Activated CD4-positive, alpha-beta memory T cell treated with anti-CD3 and anti-CD28 coated beads, Interleukin-2, amount 10 ng/mL, durations not matched to agents 7 days and 5 days (primary cell): ENCODE measurements at regions of chr9 and their contacts with region 1.

Region 1: GRCh38 chr9:4315582-4316215 is 15.8 kb upstream of the GLIS3 start:
- DNase-seq: peak; percentile 76
- H3K4me3 Mint-ChIP-seq: no peak overlapping the region
- H3K27ac Mint-ChIP-seq: no peak overlapping the region
- H3K4me1 Mint-ChIP-seq: no peaks in the 10 kb centered on the region
- H3K27me3 Mint-ChIP-seq: peaks cover 9% of the 10 kb centered on the region

Region 2: GRCh38 chr9:4301971-4302427 is 13.7 kb before region 1 on chr9:
- CTCF ChIA-PET with region 1: interaction called, 22 read pairs
- POLR2A ChIA-PET with region 1: no interaction called
- DNase-seq: no peak
- H3K4me3 Mint-ChIP-seq: no peak overlapping the region
- H3K27ac Mint-ChIP-seq: no peak overlapping the region
- H3K4me1 Mint-ChIP-seq: peaks cover 23% of the 10 kb centered on the region
- H3K27me3 Mint-ChIP-seq: peaks cover 51% of the 10 kb centered on the region

Region 3: GRCh38 chr9:4339357-4339756 is 23.7 kb after region 1 on chr9:
- CTCF ChIA-PET with region 1: interaction called, 11 read pairs
- POLR2A ChIA-PET with region 1: interaction called, 3 read pairs
- DNase-seq: peak; percentile 82
- H3K4me3 Mint-ChIP-seq: no peak overlapping the region
- H3K27ac Mint-ChIP-seq: no peak overlapping the region
- H3K4me1 Mint-ChIP-seq: peaks cover 6% of the 10 kb centered on the region
- H3K27me3 Mint-ChIP-seq: peaks cover 2% of the 10 kb centered on the region

Region 4: GRCh38 chr9:4366591-4367330 is 51.1 kb after region 1 on chr9:
- CTCF ChIA-PET with region 1: interaction called, 46 read pairs
- POLR2A ChIA-PET with region 1: no interaction called
- DNase-seq: peak; percentile 24
- H3K4me3 Mint-ChIP-seq: no peak overlapping the region
- H3K27ac Mint-ChIP-seq: no peak overlapping the region
- H3K4me1 Mint-ChIP-seq: peaks cover 2% of the 10 kb centered on the region
- H3K27me3 Mint-ChIP-seq: peaks cover 12% of the 10 kb centered on the region

Region 5: GRCh38 chr9:4375424-4376200 is 59.9 kb after region 1 on chr9:
- CTCF ChIA-PET with region 1: interaction called, 12 read pairs
- POLR2A ChIA-PET with region 1: no interaction called
- DNase-seq: no peak
- H3K4me3 Mint-ChIP-seq: no peak overlapping the region
- H3K27ac Mint-ChIP-seq: no peak overlapping the region
- H3K4me1 Mint-ChIP-seq: no peaks in the 10 kb centered on the region
- H3K27me3 Mint-ChIP-seq: peaks cover 15% of the 10 kb centered on the region